Gastrocnemius medialis (tissue), 4 donors: ENCODE measurements at regions of chr6 and their contacts with region 1.

Region 1: GRCh38 chr6:108526739-108527174 is 34.0 kb upstream of the FOXO3 start:
- DNase-seq: no peak
- ATAC-seq: peak in 1 of 2 donors; percentile 52
- H3K4me3 ChIP-seq: no peak overlapping the region
- H3K27ac ChIP-seq: no peak overlapping the region
- H3K4me1 ChIP-seq: no peaks in the 10 kb centered on the region
- H3K27me3 ChIP-seq: no peaks in the 10 kb centered on the region
- CTCF ChIP-seq: peak; percentile 66 to 84 (median 70)
- POLR2A ChIP-seq: no peak

Region 2: DNA sequence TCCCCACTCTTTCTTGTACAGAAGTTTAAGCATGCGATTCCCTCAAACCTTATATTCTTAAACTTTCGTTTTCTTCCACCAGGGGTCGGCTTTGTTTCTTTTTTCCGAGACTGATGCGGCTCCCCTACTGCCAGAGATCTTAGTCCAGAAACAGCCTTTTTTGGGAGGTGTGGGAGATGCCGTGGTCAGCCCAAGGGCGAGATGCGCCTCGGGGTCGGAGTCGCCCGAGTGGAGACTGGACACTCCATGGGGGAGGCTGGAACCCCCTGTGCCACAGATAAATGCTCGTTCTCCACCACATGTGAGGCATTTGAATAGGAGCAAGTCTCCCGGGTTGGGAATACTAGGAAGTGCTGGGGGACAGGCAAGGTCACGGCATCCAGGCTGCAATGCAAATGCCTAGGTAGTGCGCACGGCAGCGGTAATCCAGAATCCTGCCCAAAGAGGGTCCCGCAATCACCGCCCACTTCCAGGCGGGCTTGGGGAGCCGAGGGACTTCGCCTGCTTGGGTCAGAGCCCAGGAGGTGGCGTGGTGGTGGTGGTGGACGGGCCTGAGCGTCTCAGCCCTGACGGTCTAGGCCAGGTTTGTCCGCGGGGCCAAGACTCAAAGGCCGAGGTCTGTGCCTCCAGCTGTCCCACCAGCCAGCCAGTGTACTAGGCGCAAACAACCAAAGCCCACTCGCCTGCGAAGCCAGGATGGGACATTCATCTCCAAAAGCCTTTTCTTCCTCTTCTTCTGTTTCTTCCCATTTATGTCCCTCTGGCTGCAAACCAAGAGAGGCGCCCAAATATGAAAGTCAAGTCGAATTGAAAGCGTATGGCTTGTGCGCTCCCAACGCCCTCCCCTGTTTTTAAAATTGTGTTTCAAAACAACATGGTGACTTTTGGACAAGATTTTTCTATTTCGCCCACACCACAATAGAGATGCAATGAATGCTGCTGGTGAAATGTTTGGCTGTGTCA is 412.9 kb before region 1 on chr6:
- in situ Hi-C with region 1: loop called in 2 of 4 experiments (anchors 10 kb)
- intact Hi-C with region 1: loop called (anchors 10 kb)
- DNase-seq: no peak
- ATAC-seq: no peak
- H3K4me3 ChIP-seq: peak overlapping the region in 2 of 4 donors; percentile 16 to 40
- H3K27ac ChIP-seq: no peak overlapping the region
- H3K4me1 ChIP-seq: peaks cover 24 to 26% of the 10 kb centered on the region in 2 donors
- H3K27me3 ChIP-seq: peaks cover 51 to 73% (median 70%) of the 10 kb centered on the region in 3 donors
- CTCF ChIP-seq: peak; percentile 13 to 47 (median 35)
- POLR2A ChIP-seq: no peak

Region 3: GRCh38 chr6:108883172-108883571 is 356.4 kb after region 1 on chr6:
- in situ Hi-C with region 1: loop called in 1 of 4 experiments (anchors 10 kb)
- intact Hi-C with region 1: no loop called
- DNase-seq: no peak
- ATAC-seq: no peak
- H3K4me3 ChIP-seq: no peak overlapping the region
- H3K27ac ChIP-seq: no peak overlapping the region
- H3K4me1 ChIP-seq: peaks cover 0 to under 1% of the 10 kb centered on the region in 2 donors
- H3K27me3 ChIP-seq: no peaks in the 10 kb centered on the region
- CTCF ChIP-seq: no peak
- POLR2A ChIP-seq: no peak